ENCODE measurements at regions of chr11 and their contacts with region 1.

Region 1: GRCh38 chr11:118290923-118291322 is 13.6 kb upstream of the CD3E start:
- DNase-seq: no peak
- ATAC-seq: peak; percentile 96
- H3K4me3 ChIP-seq: no peak overlapping the region
- H3K27ac ChIP-seq: no peak overlapping the region
- H3K4me1 ChIP-seq: peaks cover 9% of the 10 kb centered on the region
- H3K27me3 ChIP-seq: peaks cover 6% of the 10 kb centered on the region
- CTCF ChIP-seq: peak; percentile 56

Region 2: GRCh38 chr11:118198370-118198769 is 92.6 kb before region 1 on chr11:
- intact Hi-C with region 1: loop called (anchors 10 kb)
- DNase-seq: peak; percentile 91
- ATAC-seq: peak; percentile 80
- H3K4me3 ChIP-seq: no peak overlapping the region
- H3K27ac ChIP-seq: no peak overlapping the region
- H3K4me1 ChIP-seq: peaks cover 28% of the 10 kb centered on the region
- H3K27me3 ChIP-seq: no peaks in the 10 kb centered on the region
- CTCF ChIP-seq: peak; percentile 88

Region 3: GRCh38 chr11:118471030-118471429 is 180.1 kb after region 1 on chr11:
- intact Hi-C with region 1: no loop called
- DNase-seq: no peak
- ATAC-seq: no peak
- H3K4me3 ChIP-seq: no peak overlapping the region
- H3K27ac ChIP-seq: no peak overlapping the region
- H3K4me1 ChIP-seq: no peaks in the 10 kb centered on the region
- H3K27me3 ChIP-seq: no peaks in the 10 kb centered on the region
- CTCF ChIP-seq: no peak

Measured in upper lobe of right lung (tissue), 1 donor.